ENCODE measurements at regions of chr7 and their contacts with region 1.

Region 1: GRCh38 chr7:87219545-87220025 is at the start of gene TMEM243:
- DNase-seq: peak; percentile 94
- ATAC-seq: peak; percentile 66
- H3K4me3 ChIP-seq: peak within 1 kb of the TSS; percentile 87 to 99 (median 97)
- H3K4me3 Mint-ChIP-seq: peak within 1 kb of the TSS; percentile 99
- H3K27ac ChIP-seq: peak within 1 kb of the TSS; percentile 93 to 95
- H3K27ac Mint-ChIP-seq: peak within 1 kb of the TSS; percentile 100
- H3K4me1 ChIP-seq: peaks cover 45 to 49% of the 10 kb centered on the region in 2 donors
- H3K4me1 Mint-ChIP-seq: peaks cover 45% of the 10 kb centered on the region
- H3K27me3 ChIP-seq: peaks cover 0 to 4% (median 0%) of the 10 kb centered on the region in 4 experiments
- H3K27me3 Mint-ChIP-seq: no peaks in the 10 kb centered on the region
- CTCF ChIP-seq: peak; percentile 39
- total RNA-seq, gene TMEM243: 164 and 171 TPM in 2 replicates

Region 2: DNA sequence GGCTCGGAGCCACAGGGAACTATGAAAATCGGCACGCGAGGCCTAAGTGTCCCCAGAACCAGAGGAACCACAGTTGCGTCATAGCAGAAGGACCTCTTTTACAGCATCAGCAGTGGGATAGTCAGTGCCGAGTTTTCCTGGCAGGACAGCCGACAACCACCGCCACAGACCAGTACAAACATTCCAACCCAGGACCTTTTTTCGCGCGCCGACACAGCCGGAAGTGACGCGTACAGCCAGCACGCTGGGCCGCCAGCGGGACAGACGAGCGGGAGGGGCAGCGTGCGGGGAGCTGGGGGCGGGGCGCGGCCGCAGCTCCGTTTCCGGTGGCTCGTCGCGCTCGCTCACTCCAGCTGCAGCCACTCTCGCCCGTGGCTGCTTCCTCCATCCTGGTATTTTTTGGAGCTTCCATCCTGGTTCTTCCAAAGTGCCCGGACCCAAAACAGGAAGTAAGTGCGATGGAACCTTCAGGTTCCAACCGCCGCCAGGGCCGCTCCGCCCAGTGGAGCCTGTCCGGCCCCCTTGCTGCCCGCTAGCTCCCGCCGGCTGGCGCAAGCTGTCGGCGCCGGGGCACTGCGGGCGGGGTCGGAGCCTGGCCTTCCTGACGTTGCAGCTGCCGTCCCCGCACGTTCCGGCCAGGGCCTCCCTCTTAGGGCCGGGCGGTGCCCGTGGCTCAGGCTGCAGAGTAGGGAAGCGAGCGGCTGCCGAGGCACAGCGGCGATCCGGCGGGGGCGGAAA is 67.3 kb before region 1 on chr7 and contains the start of gene DMTF1:
- CTCF ChIA-PET with region 1: interaction called, 10 read pairs
- POLR2A ChIA-PET with region 1: interaction called, 58 read pairs
- intact Hi-C with region 1: loop called (anchors 1 kb)
- DNase-seq: peak; percentile 94
- ATAC-seq: peak; percentile 83
- H3K4me3 ChIP-seq: peak within 1 kb of the TSS; percentile 75 to 97 (median 88)
- H3K4me3 Mint-ChIP-seq: peak within 1 kb of the TSS; percentile 88
- H3K27ac ChIP-seq: peak within 1 kb of the TSS; percentile 87 to 99
- H3K27ac Mint-ChIP-seq: peak within 1 kb of the TSS; percentile 91
- H3K4me1 ChIP-seq: peaks cover 27 to 45% of the 10 kb centered on the region in 2 donors
- H3K4me1 Mint-ChIP-seq: peaks cover 46% of the 10 kb centered on the region
- H3K27me3 ChIP-seq: no peaks in the 10 kb centered on the region
- H3K27me3 Mint-ChIP-seq: no peaks in the 10 kb centered on the region
- CTCF ChIP-seq: no peak
- total RNA-seq, gene DMTF1: 235 and 264 TPM in 2 replicates

Region 3: GRCh38 chr7:87199700-87200450 is 19.7 kb before region 1 on chr7:
- CTCF ChIA-PET with region 1: interaction called, 11 read pairs
- POLR2A ChIA-PET with region 1: interaction called, 4 read pairs
- intact Hi-C with region 1: loop called (anchors 1 kb)
- DNase-seq: no peak
- ATAC-seq: no peak
- H3K4me3 ChIP-seq: no peak overlapping the region
- H3K4me3 Mint-ChIP-seq: peak overlapping the region; percentile 5
- H3K27ac ChIP-seq: peak overlapping the region in 1 of 2 donors; percentile 77
- H3K27ac Mint-ChIP-seq: peak overlapping the region; percentile 37
- H3K4me1 ChIP-seq: peaks cover 33 to 51% of the 10 kb centered on the region in 2 donors
- H3K4me1 Mint-ChIP-seq: peaks cover 79% of the 10 kb centered on the region
- H3K27me3 ChIP-seq: no peaks in the 10 kb centered on the region
- H3K27me3 Mint-ChIP-seq: no peaks in the 10 kb centered on the region
- CTCF ChIP-seq: no peak

Region 4: DNA sequence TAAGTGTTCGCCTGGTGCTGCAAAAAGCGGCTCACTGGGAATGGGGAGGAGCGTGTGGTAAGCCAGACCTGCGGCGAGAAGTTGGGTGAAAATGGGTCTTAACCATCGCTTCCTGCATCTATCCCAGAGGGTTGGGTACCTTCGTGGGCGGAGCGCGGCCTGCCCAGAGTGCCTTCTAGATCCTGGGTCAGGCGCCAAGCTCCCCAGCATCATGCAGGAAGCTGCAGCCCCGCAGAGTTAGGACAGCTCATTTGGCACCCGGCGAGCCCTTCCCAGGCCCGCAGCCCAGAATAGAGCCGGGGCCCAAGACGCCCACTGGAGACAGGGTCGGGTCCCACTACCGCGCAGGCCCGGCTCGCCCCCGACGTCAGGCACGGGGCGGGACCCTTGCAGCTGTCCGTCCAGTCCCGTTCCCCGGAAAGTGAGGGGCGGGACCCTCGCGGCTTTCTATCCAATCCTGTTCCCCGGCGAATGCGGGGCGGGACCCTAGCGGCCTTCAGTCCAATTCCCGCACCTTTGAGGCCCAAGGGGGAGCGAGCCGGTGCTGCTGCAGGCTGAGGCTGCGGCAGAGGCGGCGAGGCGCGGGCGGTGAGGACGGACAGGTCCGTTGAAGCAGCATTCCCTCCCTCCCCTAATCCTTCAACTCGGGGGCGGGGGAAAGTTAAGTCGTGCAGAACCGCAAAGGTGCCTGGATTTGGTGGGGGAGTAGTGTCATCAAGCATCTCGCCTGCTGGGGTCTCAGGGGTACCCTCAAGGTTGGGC is 125.8 kb after region 1 on chr7 and contains the start of gene CROT:
- CTCF ChIA-PET with region 1: no interaction called
- POLR2A ChIA-PET with region 1: interaction called, 8 read pairs
- intact Hi-C with region 1: loop called (anchors 1 kb)
- DNase-seq: peak; percentile 94
- ATAC-seq: peak; percentile 98
- H3K4me3 ChIP-seq: peak within 1 kb of the TSS; percentile 51 to 86 (median 73)
- H3K4me3 Mint-ChIP-seq: peak within 1 kb of the TSS; percentile 97
- H3K27ac ChIP-seq: peak within 1 kb of the TSS; percentile 67 to 74
- H3K27ac Mint-ChIP-seq: peak within 1 kb of the TSS; percentile 94
- H3K4me1 ChIP-seq: peaks cover 6 to 15% of the 10 kb centered on the region in 2 donors
- H3K4me1 Mint-ChIP-seq: peaks cover 27% of the 10 kb centered on the region
- H3K27me3 ChIP-seq: no peaks in the 10 kb centered on the region
- H3K27me3 Mint-ChIP-seq: no peaks in the 10 kb centered on the region
- CTCF ChIP-seq: no peak
- total RNA-seq, gene CROT: 12.4 and 13.3 TPM in 2 replicates

Region 5: DNA sequence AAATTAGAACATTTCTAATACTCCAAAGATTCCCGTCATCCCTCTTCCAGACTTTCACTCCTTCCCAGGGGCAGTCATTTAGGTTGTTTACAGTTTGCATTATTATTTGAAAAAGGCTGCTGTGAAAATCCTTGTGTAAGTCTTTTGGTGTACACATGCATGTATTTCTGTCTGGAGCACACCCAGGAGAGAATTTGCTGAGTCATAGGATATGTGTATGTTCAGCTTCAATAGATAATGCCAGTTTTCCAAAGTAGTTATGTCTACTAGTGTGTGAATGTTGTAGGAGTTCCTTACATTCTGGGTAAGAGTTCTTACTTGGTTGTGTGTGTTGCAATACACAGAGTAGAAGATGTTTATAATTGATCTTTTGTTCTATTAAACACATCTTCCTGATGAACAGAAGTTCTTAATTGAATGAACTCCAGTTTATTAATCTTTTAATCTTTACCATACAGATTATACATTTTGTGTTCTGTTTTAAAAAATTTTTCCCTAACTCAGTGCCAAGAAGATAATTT is 151.1 kb after region 1 on chr7:
- CTCF ChIA-PET with region 1: no interaction called
- POLR2A ChIA-PET with region 1: no interaction called
- intact Hi-C with region 1: no loop called
- DNase-seq: no peak
- ATAC-seq: no peak
- H3K4me3 ChIP-seq: no peak overlapping the region
- H3K4me3 Mint-ChIP-seq: no peak overlapping the region
- H3K27ac ChIP-seq: no peak overlapping the region
- H3K27ac Mint-ChIP-seq: no peak overlapping the region
- H3K4me1 ChIP-seq: no peaks in the 10 kb centered on the region
- H3K4me1 Mint-ChIP-seq: no peaks in the 10 kb centered on the region
- H3K27me3 ChIP-seq: no peaks in the 10 kb centered on the region
- H3K27me3 Mint-ChIP-seq: no peaks in the 10 kb centered on the region
- CTCF ChIP-seq: no peak

Region 6: DNA sequence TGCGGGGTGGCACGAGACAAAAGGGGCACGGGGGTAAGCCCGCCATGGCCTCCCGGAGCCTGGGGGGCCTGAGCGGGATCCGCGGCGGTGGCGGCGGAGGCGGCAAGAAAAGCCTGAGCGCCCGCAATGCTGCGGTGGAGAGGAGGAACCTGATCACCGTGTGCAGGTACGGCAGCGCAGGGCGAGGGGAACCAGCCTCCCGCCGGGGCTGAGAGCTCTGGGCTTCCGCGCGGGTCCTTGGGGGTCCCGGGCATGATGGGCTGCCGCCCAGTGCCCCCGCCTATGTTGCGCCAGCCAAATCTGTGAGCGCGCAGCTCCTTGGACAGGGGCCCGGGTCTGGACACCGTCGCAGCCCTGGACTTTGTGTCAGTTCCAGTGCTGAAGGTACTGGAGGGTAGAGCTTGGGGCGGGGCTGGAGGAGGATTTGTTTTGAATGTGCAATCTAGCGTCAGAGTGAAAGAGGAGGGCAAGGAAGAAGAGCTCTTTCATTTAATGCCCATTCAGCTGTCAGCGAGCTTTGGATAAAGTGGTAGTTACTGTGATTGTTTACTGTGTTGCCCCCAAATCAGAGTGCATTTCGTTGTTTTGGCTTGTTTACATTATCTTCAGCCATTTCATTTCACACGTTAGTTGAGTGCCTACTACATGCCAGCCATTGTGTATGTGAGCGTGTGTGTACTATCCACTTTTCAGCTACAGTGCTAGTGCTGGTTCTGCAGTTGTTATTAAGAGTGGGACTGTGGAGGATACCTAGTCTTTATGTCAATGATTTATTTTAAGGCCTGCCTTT is 409.4 kb after region 1 on chr7:
- CTCF ChIA-PET with region 1: no interaction called
- POLR2A ChIA-PET with region 1: no interaction called
- intact Hi-C with region 1: loop called (anchors 5 kb)
- DNase-seq: peak; percentile 66
- ATAC-seq: peak; percentile 18
- H3K4me3 ChIP-seq: peak overlapping the region in 4 of 5 experiments; percentile 59 to 80 (median 70)
- H3K4me3 Mint-ChIP-seq: peak overlapping the region; percentile 82
- H3K27ac ChIP-seq: no peak overlapping the region
- H3K27ac Mint-ChIP-seq: no peak overlapping the region
- H3K4me1 ChIP-seq: peaks cover 13 to 17% of the 10 kb centered on the region in 2 donors
- H3K4me1 Mint-ChIP-seq: peaks cover 17% of the 10 kb centered on the region
- H3K27me3 ChIP-seq: peaks cover 0 to 19% (median 8%) of the 10 kb centered on the region in 4 experiments
- H3K27me3 Mint-ChIP-seq: peaks cover 19% of the 10 kb centered on the region
- CTCF ChIP-seq: no peak

Region 7: DNA sequence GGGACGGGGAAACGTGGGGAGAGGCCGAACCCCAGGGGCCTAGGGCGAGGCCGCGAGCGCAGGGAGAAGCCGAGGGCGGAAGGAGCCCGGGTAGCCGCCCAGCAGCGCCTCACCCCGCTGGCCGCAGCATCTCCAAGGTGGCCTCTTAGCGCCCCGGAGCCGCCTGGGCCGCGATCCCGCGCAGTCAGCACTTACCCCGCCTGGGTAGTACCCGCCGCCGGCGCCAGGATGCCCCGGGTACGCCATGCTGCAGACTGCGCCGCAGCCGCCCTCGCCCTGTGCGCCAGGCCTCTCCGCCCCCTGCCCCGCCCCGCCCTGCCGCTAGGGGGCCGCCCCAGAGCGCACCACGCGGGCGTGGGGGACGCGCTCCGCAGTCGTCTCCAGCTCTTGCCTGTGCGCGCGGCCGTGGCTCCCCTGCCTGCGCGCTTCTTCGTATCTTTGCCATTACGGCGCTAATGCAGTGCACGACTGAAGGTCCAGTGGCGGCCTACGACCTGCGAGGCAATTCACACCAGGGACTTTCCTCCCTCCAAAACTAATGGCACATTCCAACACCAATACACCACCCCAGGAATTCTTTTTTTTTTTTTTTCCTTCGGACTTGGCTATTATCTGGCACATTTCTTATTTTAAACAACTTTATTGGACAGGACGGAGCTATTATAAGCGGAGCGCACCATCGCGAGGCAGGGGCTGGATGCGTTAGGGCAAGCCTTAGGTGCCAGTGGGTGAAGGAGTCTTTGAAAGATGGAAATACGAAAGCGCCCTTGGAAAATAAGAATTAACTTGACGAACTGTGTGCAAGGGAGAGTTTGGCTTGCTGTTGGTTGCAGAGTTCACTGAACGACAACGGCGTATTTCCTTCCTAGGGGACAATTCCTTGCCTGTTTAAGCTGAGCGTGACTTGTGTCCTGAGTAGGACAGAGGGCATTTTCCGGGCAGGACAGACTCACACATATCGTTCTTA is 1000.5 kb after region 1 on chr7 and contains the start of gene SRI:
- CTCF ChIA-PET with region 1: no interaction called
- POLR2A ChIA-PET with region 1: no interaction called
- intact Hi-C with region 1: loop called (anchors 5 kb)
- DNase-seq: peak; percentile 94
- ATAC-seq: peak; percentile 96
- H3K4me3 ChIP-seq: peak within 1 kb of the TSS; percentile 83 to 91 (median 88)
- H3K4me3 Mint-ChIP-seq: peak within 1 kb of the TSS; percentile 94
- H3K27ac ChIP-seq: peak within 1 kb of the TSS; percentile 68 to 78
- H3K27ac Mint-ChIP-seq: peak within 1 kb of the TSS; percentile 95
- H3K4me1 ChIP-seq: peaks cover 13 to 25% of the 10 kb centered on the region in 2 donors
- H3K4me1 Mint-ChIP-seq: peaks cover 27% of the 10 kb centered on the region
- H3K27me3 ChIP-seq: no peaks in the 10 kb centered on the region
- H3K27me3 Mint-ChIP-seq: no peaks in the 10 kb centered on the region
- CTCF ChIP-seq: peak; percentile 98
- total RNA-seq, gene SRI: 46.9 and 49.9 TPM in 2 replicates